Dorsolateral prefrontal cortex (tissue), 120 donors: ENCODE measurements at regions of chr11 and their contacts with region 1.

Region 1: GRCh38 chr11:129279326-129280026 is 87.4 kb upstream of the ARHGAP32 start:
- DNase-seq: peak; percentile 36 to 88 (median 66)
- H3K4me3 ChIP-seq: peak overlapping the region; percentile 37 to 87 (median 73)
- H3K27ac ChIP-seq: peak overlapping the region in 52 of 59 donors; percentile 22 to 90 (median 75)
- H3K27me3 ChIP-seq: no peaks in the 10 kb centered on the region
- CTCF ChIP-seq: peak in 10 of 56 donors; percentile 6 to 41 (median 13)

Region 2: GRCh38 chr11:129041611-129042018 is 237.9 kb before region 1 on chr11:
- intact Hi-C with region 1: no loop called
- DNase-seq: no peak
- H3K4me3 ChIP-seq: no peak overlapping the region
- H3K27ac ChIP-seq: peak overlapping the region in 37 of 59 donors; percentile 1 to 76 (median 45)
- H3K27me3 ChIP-seq: no peaks in the 10 kb centered on the region
- CTCF ChIP-seq: no peak

Region 3: DNA sequence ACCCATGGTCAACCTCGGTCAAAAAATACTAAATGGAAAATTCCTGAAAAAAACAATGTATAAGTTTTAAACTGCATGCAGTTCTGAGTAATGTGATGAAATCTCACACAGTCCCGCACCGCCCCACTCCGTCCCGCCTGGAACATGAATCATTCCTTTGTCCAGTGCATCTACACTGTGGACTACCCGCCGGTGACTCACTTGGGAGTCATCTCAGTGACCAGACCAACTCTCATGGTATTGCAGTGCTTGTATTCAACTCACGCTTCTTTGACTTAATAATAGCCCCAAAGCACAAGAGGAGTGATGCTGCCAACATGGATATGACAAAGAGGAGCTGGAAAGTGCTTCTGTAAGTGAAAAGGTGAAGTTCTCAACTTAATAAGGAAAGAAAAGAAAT is 136.1 kb before region 1 on chr11:
- intact Hi-C with region 1: no loop called
- DNase-seq: peak in 9 of 10 donors; percentile 54 to 92 (median 72)
- H3K4me3 ChIP-seq: peak overlapping the region in 2 of 59 donors; percentile 2 to 28
- H3K27ac ChIP-seq: peak overlapping the region in 2 of 59 donors; percentile 3 to 6
- H3K27me3 ChIP-seq: no peaks in the 10 kb centered on the region
- CTCF ChIP-seq: peak in 12 of 56 donors; percentile 8 to 45 (median 18)

Region 4: GRCh38 chr11:129155745-129156144 is 123.7 kb before region 1 on chr11:
- intact Hi-C with region 1: loop called in 1 of 2 experiments (anchors 10 kb)
- DNase-seq: no peak
- H3K4me3 ChIP-seq: no peak overlapping the region
- H3K27ac ChIP-seq: no peak overlapping the region
- H3K27me3 ChIP-seq: no peaks in the 10 kb centered on the region
- CTCF ChIP-seq: no peak

Region 5: DNA sequence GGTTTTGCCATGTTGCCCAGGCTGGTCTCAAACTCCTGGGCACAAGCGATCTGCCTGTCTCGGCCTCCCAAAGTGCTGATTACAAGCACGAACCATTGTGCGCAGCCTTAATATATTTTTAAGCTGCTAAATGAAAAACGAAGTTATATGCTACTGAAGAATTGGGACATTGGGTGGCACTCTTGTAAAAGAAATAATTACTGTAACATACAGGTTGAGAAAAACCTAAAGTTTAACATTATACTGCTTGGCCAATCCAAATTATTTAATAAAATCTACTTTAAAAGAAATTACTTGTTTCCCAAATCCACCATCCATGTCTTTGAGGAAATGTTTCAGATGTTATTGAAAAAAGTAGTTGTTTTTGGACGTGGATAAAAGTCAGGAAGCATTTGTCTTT is 49.5 kb before region 1 on chr11:
- intact Hi-C with region 1: loop called in 1 of 2 experiments (anchors 2 kb)
- DNase-seq: no peak
- H3K4me3 ChIP-seq: no peak overlapping the region
- H3K27ac ChIP-seq: no peak overlapping the region
- H3K27me3 ChIP-seq: no peaks in the 10 kb centered on the region
- CTCF ChIP-seq: peak in 50 of 56 donors; percentile 9 to 73 (median 46)

Region 6: DNA sequence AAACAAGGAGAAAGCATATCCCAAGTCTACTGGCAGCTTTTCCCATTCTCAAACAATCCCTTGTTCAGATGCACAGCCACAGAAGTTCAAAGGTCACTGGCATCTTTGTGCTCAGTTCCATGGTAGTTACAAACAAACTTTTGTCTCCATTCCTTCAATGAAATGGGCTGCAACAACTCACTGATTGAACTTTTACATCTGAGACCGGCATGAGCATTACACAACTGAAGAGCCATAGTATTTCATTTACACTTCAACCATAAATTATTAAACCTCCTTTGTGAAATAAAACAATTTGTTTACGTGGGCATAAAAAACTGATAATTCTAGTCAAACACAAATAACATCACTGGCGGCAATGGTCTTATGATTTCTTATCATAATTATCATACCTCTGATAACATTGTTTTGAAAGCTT is 19.5 kb before region 1 on chr11:
- intact Hi-C with region 1: loop called in 1 of 2 experiments (anchors 2 kb)
- DNase-seq: peak in 3 of 10 donors; percentile 27 to 72 (median 64)
- H3K4me3 ChIP-seq: peak overlapping the region in 4 of 59 donors; percentile 1 to 28 (median 8)
- H3K27ac ChIP-seq: peak overlapping the region in 32 of 59 donors; percentile 1 to 76 (median 54)
- H3K27me3 ChIP-seq: no peaks in the 10 kb centered on the region
- CTCF ChIP-seq: peak in 8 of 56 donors; percentile 8 to 48 (median 28)

Region 7: DNA sequence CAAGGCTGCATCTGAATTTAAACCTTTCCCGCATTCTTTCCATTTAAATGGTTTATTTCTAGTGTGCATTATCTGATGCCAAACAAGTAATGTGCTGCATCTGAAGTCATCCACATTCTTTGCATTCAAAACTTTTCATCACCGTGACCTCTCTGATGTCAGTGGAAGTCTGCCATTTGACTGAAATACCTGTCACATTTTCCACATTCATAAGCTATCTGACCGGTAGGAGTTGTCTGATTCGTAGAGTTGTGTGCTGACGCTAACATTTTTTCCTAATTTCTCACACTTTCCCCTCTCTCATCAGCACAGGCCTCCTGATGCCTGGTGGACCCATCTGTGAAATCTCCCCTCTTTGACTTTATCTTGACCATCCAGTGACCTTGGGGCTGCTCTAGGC is 16.3 kb after region 1 on chr11:
- intact Hi-C with region 1: no loop called
- DNase-seq: no peak
- H3K4me3 ChIP-seq: no peak overlapping the region
- H3K27ac ChIP-seq: no peak overlapping the region
- H3K27me3 ChIP-seq: peaks cover 0 to 8% (median 0%) of the 10 kb centered on the region in 45 donors
- CTCF ChIP-seq: no peak

Region 8: DNA sequence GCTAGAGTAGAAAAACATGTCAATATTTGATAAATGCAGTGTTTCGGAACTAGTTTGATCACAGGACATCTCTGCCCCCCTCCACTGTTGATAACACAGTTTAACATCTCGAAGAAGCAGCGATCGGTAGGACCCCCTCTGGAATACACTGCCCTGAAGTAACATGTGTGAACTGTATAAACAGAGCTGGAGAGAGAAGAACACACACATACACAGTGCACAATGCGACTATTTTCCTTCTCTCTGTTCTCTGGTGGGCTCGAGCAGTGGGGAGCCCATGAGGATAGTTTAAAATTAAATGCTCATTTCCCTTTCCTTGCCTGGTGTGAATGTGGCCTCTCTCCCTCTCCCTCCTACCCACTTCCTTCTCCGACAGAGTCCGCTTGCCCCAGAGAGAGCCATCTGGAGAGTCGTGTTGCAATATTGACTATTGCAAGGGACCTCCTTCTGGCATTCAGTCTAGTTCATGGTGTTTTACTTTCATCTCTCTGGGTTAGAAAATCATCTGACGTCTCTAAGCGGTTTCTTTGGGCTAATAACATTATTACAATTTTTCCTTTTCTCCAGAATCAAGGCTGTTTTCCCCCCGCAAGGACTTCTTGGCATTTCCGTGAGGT is 44.5 kb after region 1 on chr11:
- intact Hi-C with region 1: loop called in 1 of 2 experiments (anchors 5 kb)
- DNase-seq: no peak
- H3K4me3 ChIP-seq: peak overlapping the region in 7 of 59 donors; percentile 0 to 23 (median 9)
- H3K27ac ChIP-seq: peak overlapping the region in 14 of 59 donors; percentile 12 to 60 (median 36)
- H3K27me3 ChIP-seq: no peaks in the 10 kb centered on the region
- CTCF ChIP-seq: no peak